Endothelial cell of umbilical vein (primary cell): ENCODE measurements at regions of chr3 and their contacts with region 1.

Region 1: GRCh38 chr3:70963431-70964275 is 619.9 kb downstream of the FOXP1 start:
- DNase-seq: no peak
- H3K4me3 ChIP-seq: no peak overlapping the region
- H3K27ac ChIP-seq: no peak overlapping the region
- H3K4me1 ChIP-seq: no peaks in the 10 kb centered on the region
- H3K27me3 ChIP-seq: no peaks in the 10 kb centered on the region
- CTCF ChIP-seq: no peak
- POLR2A ChIP-seq: no peak

Region 2: GRCh38 chr3:70646628-70647027 is 317.0 kb before region 1 on chr3:
- CTCF ChIA-PET with region 1: no interaction called
- POLR2A ChIA-PET with region 1: no interaction called
- dilution Hi-C with region 1: no loop called
- intact Hi-C with region 1: no loop called
- DNase-seq: no peak
- H3K4me3 ChIP-seq: no peak overlapping the region
- H3K27ac ChIP-seq: no peak overlapping the region
- H3K4me1 ChIP-seq: no peaks in the 10 kb centered on the region
- H3K27me3 ChIP-seq: no peaks in the 10 kb centered on the region
- CTCF ChIP-seq: no peak
- POLR2A ChIP-seq: no peak

Region 3: DNA sequence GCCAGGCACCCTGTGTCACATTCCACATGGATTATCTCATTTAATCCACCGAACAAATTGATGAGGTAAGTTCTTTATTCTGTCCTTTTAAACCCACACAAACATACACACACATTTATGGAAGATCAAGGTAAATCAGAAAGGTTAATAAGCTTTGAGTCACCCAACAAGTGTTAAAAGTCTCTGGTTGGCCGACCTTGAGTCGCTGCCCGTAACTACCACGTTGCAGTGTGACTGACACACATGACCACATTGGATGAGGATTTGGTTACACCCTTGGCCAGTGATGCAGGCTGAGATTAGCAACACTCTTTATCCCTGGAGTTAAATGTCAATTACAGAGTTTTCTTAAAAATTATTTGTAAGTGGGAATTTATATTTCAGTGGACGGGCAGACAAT is 600.7 kb after region 1 on chr3:
- CTCF ChIA-PET with region 1: no interaction called
- POLR2A ChIA-PET with region 1: interaction called, 10 read pairs
- dilution Hi-C with region 1: no loop called
- intact Hi-C with region 1: no loop called
- DNase-seq: no peak
- H3K4me3 ChIP-seq: no peak overlapping the region
- H3K27ac ChIP-seq: no peak overlapping the region
- H3K4me1 ChIP-seq: no peaks in the 10 kb centered on the region
- H3K27me3 ChIP-seq: no peaks in the 10 kb centered on the region
- CTCF ChIP-seq: no peak
- POLR2A ChIP-seq: no peak